Common myeloid progenitor, CD34-positive (primary cell): ENCODE measurements at regions of chr2 and their contacts with region 1.

Region 1: GRCh38 chr2:161136696-161137324 is 23.4 kb upstream of the TANK start:
- DNase-seq: peak; percentile 88 to 97 (median 95)
- H3K4me3 ChIP-seq: peak overlapping the region in 6 of 7 experiments; percentile 44 to 80 (median 60)
- H3K27ac ChIP-seq: peak overlapping the region; percentile 87 to 91
- H3K4me1 ChIP-seq: peaks cover 24 to 63% (median 41%) of the 10 kb centered on the region in 4 experiments
- H3K27me3 ChIP-seq: no peaks in the 10 kb centered on the region

Region 2: GRCh38 chr2:161147856-161148569 is 11.2 kb after region 1 on chr2:
- CTCF ChIA-PET with region 1: no interaction called
- POLR2A ChIA-PET with region 1: no interaction called
- DNase-seq: no peak
- H3K4me3 ChIP-seq: no peak overlapping the region
- H3K27ac ChIP-seq: no peak overlapping the region
- H3K4me1 ChIP-seq: no peaks in the 10 kb centered on the region
- H3K27me3 ChIP-seq: no peaks in the 10 kb centered on the region

Region 3: DNA sequence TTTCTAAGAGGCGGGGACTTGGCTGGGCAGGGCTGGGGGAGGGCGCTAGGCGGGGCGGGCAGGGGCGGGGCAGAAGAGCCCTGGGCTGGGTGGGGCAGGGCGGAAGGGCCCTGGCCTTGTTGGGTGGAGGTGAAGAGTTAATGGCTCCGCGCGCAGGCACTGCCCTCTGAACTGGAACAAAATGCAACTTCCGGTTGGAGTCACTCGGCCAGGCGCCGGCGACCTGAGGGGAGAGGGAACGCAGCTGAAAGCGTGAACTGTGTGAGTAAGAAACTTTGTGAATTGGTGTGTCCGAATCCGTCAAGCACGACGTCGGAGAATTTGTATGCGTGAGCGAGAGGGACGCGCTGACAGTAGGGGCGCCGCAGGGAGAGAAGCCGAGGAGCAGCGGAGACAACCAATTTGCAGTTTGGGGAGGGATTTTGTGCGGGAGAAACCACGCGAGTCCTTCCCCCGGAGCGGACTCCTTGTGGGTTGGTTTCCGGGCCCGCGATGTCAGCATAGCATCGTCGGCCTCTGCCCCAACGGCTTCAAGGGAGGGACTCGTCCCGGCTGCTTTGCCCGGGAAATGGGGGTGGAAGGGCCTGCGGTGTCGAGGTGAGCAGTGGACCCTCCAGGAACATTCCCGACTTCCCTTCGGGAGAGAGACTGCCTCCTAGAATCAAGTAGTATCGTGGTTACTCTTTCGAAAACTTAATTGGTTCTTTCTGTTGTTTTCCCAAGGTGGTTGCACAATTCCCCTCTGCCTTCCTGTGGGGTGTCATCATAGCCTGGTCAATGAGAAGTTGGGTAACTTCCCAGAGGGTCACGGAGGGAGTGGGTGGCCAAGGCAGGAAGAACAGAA is 23.6 kb after region 1 on chr2 and contains the start of gene TANK:
- CTCF ChIA-PET with region 1: interaction called, 4 read pairs
- POLR2A ChIA-PET with region 1: interaction called, 12 read pairs
- DNase-seq: peak; percentile 94 to 96 (median 96)
- H3K4me3 ChIP-seq: peak within 1 kb of the TSS; percentile 91 to 98 (median 94)
- H3K27ac ChIP-seq: peak within 1 kb of the TSS; percentile 91 to 95
- H3K4me1 ChIP-seq: peaks cover 4 to 25% (median 14%) of the 10 kb centered on the region in 4 experiments
- H3K27me3 ChIP-seq: no peaks in the 10 kb centered on the region

Region 4: GRCh38 chr2:161208527-161209139 is 71.8 kb after region 1 on chr2:
- CTCF ChIA-PET with region 1: no interaction called
- POLR2A ChIA-PET with region 1: no interaction called
- DNase-seq: no peak
- H3K4me3 ChIP-seq: no peak overlapping the region
- H3K27ac ChIP-seq: no peak overlapping the region
- H3K4me1 ChIP-seq: no peaks in the 10 kb centered on the region
- H3K27me3 ChIP-seq: no peaks in the 10 kb centered on the region